ENCODE measurements at regions of chr1 and their contacts with region 1.

Region 1: DNA sequence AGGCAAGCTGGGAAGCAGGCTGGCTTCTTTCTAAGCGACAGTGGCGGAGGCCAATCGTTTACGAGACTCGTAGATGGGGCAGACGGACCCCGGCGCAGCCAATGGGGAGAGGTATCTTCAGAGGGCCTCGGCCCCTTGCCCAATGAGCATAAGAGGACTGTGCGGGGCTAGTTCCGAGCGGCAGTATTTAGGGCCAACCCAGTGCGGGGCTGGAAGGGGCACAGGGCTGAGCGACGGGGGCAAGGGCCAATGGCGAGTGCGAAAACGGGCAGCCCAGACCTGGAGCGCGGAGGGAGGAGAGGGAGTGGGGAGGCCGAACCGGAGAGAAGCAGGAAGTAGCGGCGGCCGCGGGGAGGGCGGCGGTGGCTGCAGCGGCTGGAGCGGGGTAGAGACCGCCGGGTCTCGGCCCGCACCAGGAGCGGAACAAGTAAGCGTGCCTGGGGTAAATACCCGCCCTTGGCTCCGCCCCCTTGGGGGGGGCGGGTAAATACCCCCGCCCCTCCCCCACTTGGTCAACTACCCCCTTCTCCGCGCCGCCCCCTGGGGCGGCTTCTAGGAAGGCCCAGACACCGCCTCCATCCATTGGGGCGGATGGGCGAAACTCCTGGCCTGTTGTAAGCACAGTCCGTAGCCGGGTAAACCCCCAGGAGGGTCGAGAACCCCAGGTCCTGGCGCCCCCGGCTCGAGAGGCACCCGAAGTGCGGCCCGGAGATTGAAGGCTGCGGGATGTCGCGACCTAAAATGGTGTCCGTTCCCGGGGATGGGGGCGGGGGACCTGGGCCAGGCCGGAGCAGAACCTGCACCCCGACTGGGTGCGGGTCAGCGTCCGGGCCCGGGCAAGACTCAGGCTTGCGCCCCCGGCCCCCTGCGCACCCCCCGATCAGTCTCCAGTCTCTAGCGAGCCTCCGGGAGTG is at the start of gene ZNF687:
- DNase-seq: peak; percentile 100
- ATAC-seq: peak; percentile 95
- H3K4me3 ChIP-seq: peak within 1 kb of the TSS; percentile 78 to 93 (median 85)
- H3K27ac ChIP-seq: peak within 1 kb of the TSS; percentile 98
- H3K4me1 ChIP-seq: peaks cover 22% of the 10 kb centered on the region
- H3K27me3 ChIP-seq: no peaks in the 10 kb centered on the region; a peak in 1 of 5 replicates
- CTCF ChIP-seq: no peak
- EP300 ChIP-seq: no peak; a peak in 1 of 4 replicates
- POLR2A ChIP-seq: peak; percentile 12 to 25; a peak in 3 of 4 replicates
- RAD21 ChIP-seq: no peak; the same call in 1 of the 2 replicates
- total RNA-seq, gene ZNF687: 14.1 and 15.0 TPM in 2 replicates

Region 2: GRCh38 chr1:151189638-151190445 is 92.4 kb before region 1 on chr1 and contains the start of gene VPS72:
- CTCF ChIA-PET with region 1: no interaction called
- POLR2A ChIA-PET with region 1: interaction called, 10 read pairs
- in situ Hi-C with region 1: no loop called
- intact Hi-C with region 1: no loop called
- DNase-seq: peak; percentile 85
- ATAC-seq: peak; percentile 95
- H3K4me3 ChIP-seq: peak within 1 kb of the TSS; percentile 78 to 82 (median 81)
- H3K27ac ChIP-seq: peak within 1 kb of the TSS; percentile 78
- H3K4me1 ChIP-seq: peaks cover 42% of the 10 kb centered on the region
- H3K27me3 ChIP-seq: no peaks in the 10 kb centered on the region
- CTCF ChIP-seq: peak; percentile 51
- EP300 ChIP-seq: peak in 1 of 2 experiments; percentile 44; a peak in 1 of 4 replicates
- POLR2A ChIP-seq: peak in 1 of 2 experiments; percentile 91
- RAD21 ChIP-seq: peak; percentile 14; the same call in 1 of the 2 replicates
- total RNA-seq, gene VPS72: 34.5 TPM in 2 replicates

Region 3: DNA sequence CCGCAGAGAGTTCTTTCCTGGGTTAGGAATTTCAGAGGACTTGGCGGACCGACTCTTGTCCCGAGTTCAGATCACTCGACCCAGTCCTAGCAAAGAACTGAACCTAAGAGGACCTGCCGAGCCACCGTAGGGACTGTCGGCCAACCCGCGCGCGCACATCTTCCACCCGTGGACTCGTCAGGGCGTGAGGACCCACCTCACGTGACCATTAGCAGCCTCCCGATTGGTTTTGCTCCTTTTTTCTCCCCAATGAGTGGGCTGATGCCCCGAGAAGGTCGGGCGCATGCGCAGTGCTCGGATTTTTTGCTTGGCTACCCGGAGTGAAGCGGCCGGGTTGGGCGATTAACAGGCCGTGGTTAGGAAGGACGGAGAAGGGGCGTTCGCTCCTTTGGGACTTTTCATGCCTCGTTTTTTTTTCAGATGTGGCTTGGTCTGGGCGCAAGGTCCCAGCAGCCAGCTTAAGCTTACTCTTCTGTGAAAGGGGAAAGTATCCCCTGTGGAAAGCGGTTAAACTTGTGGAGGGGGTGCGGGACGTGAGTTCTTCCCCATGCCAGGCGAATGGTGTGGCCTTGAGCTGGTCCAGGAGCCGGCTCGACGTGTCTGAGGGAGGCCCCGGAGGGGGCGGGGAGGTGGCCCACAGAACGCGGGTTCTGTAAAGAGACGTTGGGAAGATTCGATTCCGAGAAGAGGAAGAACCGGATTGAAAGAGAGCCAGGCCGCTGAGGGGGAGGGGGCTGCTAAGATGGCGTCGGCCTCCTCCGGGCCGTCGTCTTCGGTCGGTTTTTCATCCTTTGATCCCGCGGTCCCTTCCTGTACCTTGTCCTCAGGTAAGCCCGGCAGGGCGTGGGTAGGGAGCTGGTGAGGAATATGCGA is 83.7 kb before region 1 on chr1 and contains the start of gene PIP5K1A:
- CTCF ChIA-PET with region 1: no interaction called
- POLR2A ChIA-PET with region 1: interaction called, 5 read pairs
- in situ Hi-C with region 1: no loop called
- intact Hi-C with region 1: loop called (anchors 1 kb)
- DNase-seq: peak; percentile 97
- ATAC-seq: peak; percentile 76
- H3K4me3 ChIP-seq: peak within 1 kb of the TSS; percentile 87 to 95 (median 94)
- H3K27ac ChIP-seq: peak within 1 kb of the TSS; percentile 93
- H3K4me1 ChIP-seq: peaks cover 34% of the 10 kb centered on the region
- H3K27me3 ChIP-seq: no peaks in the 10 kb centered on the region; a peak in 1 of 5 replicates
- CTCF ChIP-seq: no peak
- EP300 ChIP-seq: no peak
- POLR2A ChIP-seq: peak; percentile 74 to 84
- RAD21 ChIP-seq: no peak
- total RNA-seq, gene PIP5K1A: 43.8 and 45.3 TPM in 2 replicates

Region 4: GRCh38 chr1:151238467-151238739 is 43.8 kb before region 1 on chr1:
- CTCF ChIA-PET with region 1: no interaction called
- POLR2A ChIA-PET with region 1: no interaction called
- in situ Hi-C with region 1: no loop called
- intact Hi-C with region 1: no loop called
- DNase-seq: no peak
- ATAC-seq: no peak
- H3K4me3 ChIP-seq: no peak overlapping the region
- H3K27ac ChIP-seq: no peak overlapping the region
- H3K4me1 ChIP-seq: no peaks in the 10 kb centered on the region
- H3K27me3 ChIP-seq: no peaks in the 10 kb centered on the region
- CTCF ChIP-seq: no peak
- EP300 ChIP-seq: no peak
- POLR2A ChIP-seq: no peak
- RAD21 ChIP-seq: no peak

Region 5: DNA sequence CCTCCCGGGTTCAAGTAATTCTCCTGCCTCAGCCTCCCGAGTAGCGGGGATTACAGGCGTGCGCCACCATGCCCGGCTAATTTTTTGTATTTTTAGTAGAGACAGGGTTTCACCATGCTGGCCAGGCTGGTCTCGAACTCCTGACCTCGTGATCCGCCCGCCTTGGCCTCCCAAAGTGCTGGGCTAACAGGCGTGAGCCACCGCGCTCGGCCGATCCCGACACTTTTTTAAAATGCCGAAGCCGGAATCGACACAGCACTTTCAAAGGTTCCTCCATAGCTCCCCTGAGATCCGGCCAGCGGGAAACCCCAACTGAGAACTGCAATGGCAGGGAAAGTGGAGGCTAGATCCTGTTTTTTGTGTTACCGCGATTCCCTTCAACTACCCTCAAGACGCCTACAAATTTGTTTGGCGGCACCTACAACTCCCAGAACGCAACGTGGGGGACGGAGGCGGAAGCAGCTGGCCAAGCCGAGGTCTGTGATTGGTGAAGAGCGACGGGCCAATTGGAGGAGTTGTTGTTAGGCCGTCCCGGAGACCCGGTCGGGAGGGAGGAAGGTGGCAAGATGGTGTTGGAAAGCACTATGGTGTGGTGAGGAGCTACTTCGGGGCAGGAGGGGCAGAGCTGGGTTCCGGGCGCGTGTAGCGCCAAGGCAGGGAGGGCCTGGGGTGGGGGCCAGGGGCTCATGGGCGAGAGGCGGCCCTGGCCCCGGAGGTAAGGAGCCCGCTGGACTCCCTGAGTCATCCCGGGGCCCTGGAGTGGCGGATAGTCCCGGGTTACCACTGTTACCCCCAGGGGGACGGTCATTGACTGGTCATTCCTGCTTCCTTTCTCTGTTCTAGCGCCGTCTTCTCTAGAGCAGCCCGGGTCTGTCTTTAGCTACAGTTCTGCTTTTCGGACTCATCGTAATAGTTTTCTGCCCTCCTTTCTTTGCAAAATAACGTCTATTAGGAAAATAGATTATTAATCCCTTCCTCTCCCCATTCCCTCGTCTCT is 27.7 kb before region 1 on chr1 and contains the start of gene PSMD4:
- CTCF ChIA-PET with region 1: no interaction called
- POLR2A ChIA-PET with region 1: interaction called, 71 read pairs
- in situ Hi-C with region 1: no loop called
- intact Hi-C with region 1: loop called (anchors 2 kb)
- DNase-seq: peak; percentile 94
- ATAC-seq: peak; percentile 96
- H3K4me3 ChIP-seq: peak within 1 kb of the TSS; percentile 67 to 90 (median 86)
- H3K27ac ChIP-seq: peak within 1 kb of the TSS; percentile 86
- H3K4me1 ChIP-seq: peaks cover 34% of the 10 kb centered on the region
- H3K27me3 ChIP-seq: no peaks in the 10 kb centered on the region; a peak in 1 of 5 replicates
- CTCF ChIP-seq: no peak
- EP300 ChIP-seq: no peak
- POLR2A ChIP-seq: peak; percentile 91 to 96
- RAD21 ChIP-seq: no peak
- total RNA-seq, gene PSMD4: 243 and 320 TPM in 2 replicates

Region 6: DNA sequence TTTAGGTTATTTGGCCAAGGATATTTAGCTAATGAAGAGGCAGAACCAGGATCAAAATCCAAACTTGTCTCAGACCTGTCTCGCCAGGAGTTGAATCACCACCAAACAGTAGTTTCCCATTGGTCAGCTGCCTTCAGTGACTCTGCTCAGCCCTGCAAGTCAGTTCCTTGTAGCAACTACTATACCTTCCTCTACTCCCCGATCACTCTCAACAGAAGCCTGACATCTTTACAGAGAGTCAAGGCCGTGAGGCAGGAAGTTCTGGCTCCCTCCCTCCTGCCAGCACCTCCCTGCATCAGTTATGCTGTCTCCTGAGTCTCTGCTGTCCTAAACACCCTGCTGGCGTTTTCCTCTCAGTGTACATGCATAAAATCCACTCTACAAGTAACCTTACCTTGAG is 14.5 kb before region 1 on chr1:
- CTCF ChIA-PET with region 1: no interaction called
- POLR2A ChIA-PET with region 1: interaction called, 67 read pairs
- in situ Hi-C with region 1: no loop called
- intact Hi-C with region 1: no loop called
- DNase-seq: no peak
- ATAC-seq: no peak
- H3K4me3 ChIP-seq: no peak overlapping the region
- H3K27ac ChIP-seq: no peak overlapping the region
- H3K4me1 ChIP-seq: peaks cover 26% of the 10 kb centered on the region
- H3K27me3 ChIP-seq: no peaks in the 10 kb centered on the region
- CTCF ChIP-seq: no peak
- EP300 ChIP-seq: no peak
- POLR2A ChIP-seq: no peak
- RAD21 ChIP-seq: no peak

Region 7: GRCh38 chr1:151311589-151312331 is 29.5 kb after region 1 on chr1:
- CTCF ChIA-PET with region 1: no interaction called
- POLR2A ChIA-PET with region 1: interaction called, 11 read pairs
- in situ Hi-C with region 1: no loop called
- intact Hi-C with region 1: no loop called
- DNase-seq: peak; percentile 82
- ATAC-seq: peak; percentile 78
- H3K4me3 ChIP-seq: no peak overlapping the region
- H3K27ac ChIP-seq: no peak overlapping the region
- H3K4me1 ChIP-seq: peaks cover 17% of the 10 kb centered on the region
- H3K27me3 ChIP-seq: no peaks in the 10 kb centered on the region
- CTCF ChIP-seq: no peak
- EP300 ChIP-seq: no peak
- POLR2A ChIP-seq: no peak
- RAD21 ChIP-seq: no peak

Region 8: DNA sequence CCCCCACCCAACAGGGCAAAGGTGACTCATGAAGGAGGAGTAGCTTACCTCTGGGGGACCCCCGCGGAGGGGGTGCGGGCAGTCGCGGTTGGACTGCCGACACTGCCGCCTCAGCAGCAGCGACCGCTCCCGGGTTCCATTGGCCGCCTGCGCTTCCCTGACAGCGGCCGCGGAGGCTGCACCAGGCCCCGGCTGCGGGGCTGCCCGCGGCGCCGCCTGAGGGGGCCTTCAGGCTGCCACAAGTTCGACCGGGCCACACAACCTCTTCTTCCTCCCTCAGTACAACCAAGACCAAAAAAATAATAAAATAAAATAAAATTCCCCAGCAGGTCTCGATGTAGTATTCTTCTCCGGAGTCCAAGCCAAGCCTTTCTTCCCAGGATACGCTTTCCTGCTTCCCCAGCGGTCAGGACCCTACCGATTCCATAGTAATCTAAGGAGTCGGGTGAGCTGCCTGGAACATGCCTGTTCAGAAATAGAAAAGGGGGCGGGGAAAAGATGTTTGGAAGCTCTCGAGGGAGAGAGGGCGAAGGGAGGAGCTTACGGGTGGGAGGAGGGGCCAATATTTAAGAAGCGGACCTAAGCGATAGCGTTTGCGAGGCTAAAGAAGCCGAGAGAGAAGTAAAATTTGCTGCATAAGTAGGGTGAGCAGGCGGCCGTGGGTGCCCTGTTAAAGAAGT is 45.1 kb after region 1 on chr1 and contains the start of gene PI4KB:
- CTCF ChIA-PET with region 1: no interaction called
- POLR2A ChIA-PET with region 1: interaction called, 14 read pairs
- in situ Hi-C with region 1: no loop called
- intact Hi-C with region 1: loop called (anchors 1 kb)
- DNase-seq: peak; percentile 97
- ATAC-seq: peak; percentile 92
- H3K4me3 ChIP-seq: peak within 1 kb of the TSS; percentile 78 to 82 (median 79)
- H3K27ac ChIP-seq: peak within 1 kb of the TSS; percentile 93
- H3K4me1 ChIP-seq: peaks cover 33% of the 10 kb centered on the region
- H3K27me3 ChIP-seq: no peaks in the 10 kb centered on the region; a peak in 1 of 5 replicates
- CTCF ChIP-seq: no peak
- EP300 ChIP-seq: no peak
- POLR2A ChIP-seq: peak; percentile 58 to 69
- RAD21 ChIP-seq: no peak
- total RNA-seq, gene PI4KB: 18.6 and 19.5 TPM in 2 replicates

Region 9: GRCh38 chr1:151472856-151473731 is 190.9 kb after region 1 on chr1:
- CTCF ChIA-PET with region 1: no interaction called
- POLR2A ChIA-PET with region 1: no interaction called
- in situ Hi-C with region 1: no loop called
- intact Hi-C with region 1: no loop called
- DNase-seq: no peak
- ATAC-seq: peak; percentile 59; the same call in 2 of the 3 replicates
- H3K4me3 ChIP-seq: peak overlapping the region; percentile 51 to 56 (median 52); a peak in 5 of 6 replicates
- H3K27ac ChIP-seq: no peak overlapping the region
- H3K4me1 ChIP-seq: peaks cover 11% of the 10 kb centered on the region; the same call in 1 of the 2 replicates
- H3K27me3 ChIP-seq: no peaks in the 10 kb centered on the region; a peak in 1 of 5 replicates
- CTCF ChIP-seq: no peak
- EP300 ChIP-seq: no peak
- POLR2A ChIP-seq: no peak
- RAD21 ChIP-seq: no peak